ENCODE measurements at regions of chr10 and their contacts with region 1.

Region 1: GRCh38 chr10:102604379-102604960 is 39.8 kb upstream of the TRIM8 start:
- DNase-seq: no peak

Region 2: DNA sequence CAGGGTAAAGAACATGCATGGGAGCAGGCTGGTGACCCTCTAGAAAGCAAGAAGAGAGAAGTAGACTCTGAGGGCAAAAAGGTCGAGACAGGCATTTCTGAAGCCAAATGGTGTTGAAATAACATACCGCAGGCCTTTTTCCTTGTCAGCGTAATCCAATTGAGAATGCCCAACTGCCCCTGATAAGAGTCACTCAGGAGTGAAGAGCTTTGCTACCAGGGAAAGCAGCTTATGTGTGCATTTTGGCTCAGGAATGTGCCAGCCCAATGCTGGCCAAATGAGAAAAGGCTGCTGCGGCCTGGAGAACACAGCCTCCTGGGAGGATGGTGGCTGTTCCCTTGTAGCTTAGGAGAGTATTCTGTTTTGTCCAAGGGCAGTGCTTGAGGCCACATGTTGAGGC is 270.4 kb before region 1 on chr10:
- in situ Hi-C with region 1: no loop called
- DNase-seq: peak; percentile 86

Region 3: GRCh38 chr10:102503281-102504220 is 100.9 kb before region 1 on chr10 and contains the start of gene SUFU:
- in situ Hi-C with region 1: loop called (anchors 10 kb)
- DNase-seq: peak; percentile 99
- total RNA-seq, gene SUFU: 1.7 and 2.4 TPM in 2 replicates

Region 4: DNA sequence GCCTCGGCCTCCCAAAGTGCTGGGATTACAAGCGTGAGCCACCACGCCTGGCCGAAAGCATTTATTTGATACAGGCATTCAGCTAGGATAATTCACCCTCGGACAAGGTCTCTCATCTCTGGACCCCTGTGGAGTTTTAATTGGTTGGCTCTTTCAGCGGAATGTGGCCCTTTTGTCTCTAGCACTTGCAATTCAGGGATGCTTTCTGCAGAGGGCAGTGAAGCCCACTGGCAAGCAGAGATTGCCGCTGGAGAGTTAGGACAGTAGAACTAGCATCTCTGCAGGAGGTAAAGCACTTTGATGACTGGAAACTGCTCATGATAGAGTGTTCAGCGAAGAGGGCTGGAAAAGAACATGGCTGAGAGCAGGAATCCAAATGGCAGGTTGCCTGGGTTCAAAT is 38.7 kb before region 1 on chr10:
- in situ Hi-C with region 1: no loop called
- DNase-seq: no peak

Region 5: DNA sequence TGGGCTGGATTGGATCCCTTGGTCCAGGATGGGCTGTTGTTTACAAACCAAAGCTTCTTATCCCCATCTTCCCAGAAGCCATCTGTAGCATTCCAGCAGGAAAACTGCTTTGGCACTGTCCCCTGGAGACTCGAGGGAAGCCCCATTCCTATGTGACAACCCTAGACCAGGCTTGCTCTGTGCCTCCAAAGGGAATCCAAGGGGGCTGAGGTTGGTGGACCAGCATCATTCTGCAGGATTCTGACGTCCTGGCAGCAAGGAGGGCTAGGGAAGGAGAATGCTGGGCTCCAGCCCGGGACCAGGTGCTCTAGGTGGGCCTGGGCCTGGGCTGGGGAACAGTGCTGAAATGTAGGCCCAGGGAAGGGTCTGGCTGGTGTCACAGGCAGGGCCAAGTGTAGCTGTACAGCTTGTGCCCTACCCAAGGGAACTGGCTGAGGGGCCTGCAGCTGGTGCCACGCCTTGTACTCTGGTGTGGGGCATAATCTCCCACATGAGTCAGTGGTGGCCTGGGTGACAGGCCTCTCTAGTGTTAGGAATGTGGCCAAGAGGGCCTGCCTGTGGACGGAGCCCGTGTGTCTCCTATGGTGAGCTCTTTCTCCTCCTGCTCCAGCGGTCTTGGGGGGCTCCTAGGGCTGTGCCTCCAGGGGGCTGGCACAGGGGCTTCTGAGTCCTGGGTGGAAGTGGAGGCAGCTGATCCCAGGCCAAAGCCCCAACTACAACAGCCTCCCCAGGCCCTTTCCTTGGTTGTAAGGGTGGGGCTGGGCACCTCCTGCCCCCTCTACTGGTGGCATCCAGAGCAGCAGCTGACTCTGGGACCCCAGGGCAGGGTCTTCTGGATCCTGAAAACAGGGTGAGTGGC is 65.0 kb after region 1 on chr10:
- in situ Hi-C with region 1: no loop called
- DNase-seq: no peak